GM12878 (cell line): ENCODE measurements at regions of chr10 and their contacts with region 1.

Region 1: DNA sequence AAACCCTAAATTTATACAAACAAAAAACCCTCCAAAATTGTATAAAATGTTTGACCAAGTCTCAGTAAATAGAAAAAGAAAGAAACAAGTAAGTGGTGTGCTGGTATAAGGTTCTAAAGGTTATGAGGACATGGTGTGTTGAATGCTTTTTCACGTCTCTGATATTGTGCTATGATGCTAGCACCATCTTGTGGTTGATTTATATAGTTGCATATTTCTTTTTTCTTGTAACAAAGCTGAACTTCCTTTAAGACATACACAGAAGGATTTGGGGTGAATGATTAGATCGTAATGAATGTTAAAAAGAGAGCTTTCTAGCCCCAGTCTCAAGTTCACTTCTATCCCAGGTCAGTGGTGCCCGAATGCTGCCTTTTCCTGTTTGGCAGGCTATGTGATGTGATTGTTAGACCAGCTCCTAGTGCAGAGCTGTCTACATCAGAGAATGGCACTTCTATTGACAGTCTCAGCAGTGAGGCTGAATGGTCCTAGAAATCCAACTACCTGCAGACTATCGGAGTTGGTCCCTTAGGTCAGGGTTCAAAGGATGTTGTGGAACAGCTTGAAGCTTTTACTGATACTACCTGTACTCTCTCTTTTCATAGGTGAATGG is 25.0 kb downstream of the VTI1A start:
- DNase-seq: peak; percentile 25
- ATAC-seq: peak; percentile 91
- H3K4me3 ChIP-seq: no peak overlapping the region
- H3K27ac ChIP-seq: no peak overlapping the region
- H3K4me1 ChIP-seq: no peaks in the 10 kb centered on the region
- H3K27me3 ChIP-seq: no peaks in the 10 kb centered on the region
- CTCF ChIP-seq: peak; percentile 56 to 82 (median 68); a peak in 5 of 6 replicates
- EP300 ChIP-seq: no peak
- POLR2A ChIP-seq: no peak
- RAD21 ChIP-seq: peak; percentile 78

Region 2: DNA sequence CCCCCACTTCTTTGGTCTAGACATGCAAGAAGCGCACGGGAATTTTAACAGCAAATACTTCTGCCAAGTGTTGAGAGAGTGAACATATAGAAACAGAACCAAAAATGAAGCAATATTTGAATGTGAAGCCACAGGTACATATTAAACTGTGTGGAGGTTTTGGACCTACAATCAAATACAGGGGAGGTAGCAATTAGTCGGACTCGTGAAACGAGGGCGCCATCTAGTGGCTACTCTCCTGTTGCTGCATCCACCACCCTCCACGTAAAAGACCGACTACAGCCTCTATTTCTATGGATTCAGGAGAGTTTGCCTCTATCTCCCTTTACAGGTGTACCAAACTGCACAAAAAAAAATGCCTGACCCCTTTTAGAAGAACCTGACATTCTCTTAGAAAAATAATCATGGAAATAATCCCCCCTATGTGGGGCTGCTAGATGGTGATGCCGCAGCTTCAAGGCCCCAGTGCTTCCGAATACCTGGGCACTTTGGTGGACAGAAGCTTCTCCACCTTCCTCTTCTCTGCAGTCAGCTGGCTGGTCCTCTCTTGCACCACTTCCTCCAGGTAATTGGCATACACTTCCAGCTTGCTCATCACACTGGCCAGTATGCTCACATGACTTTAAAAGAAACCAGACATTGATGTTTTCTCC is 157.0 kb before region 1 on chr10:
- CTCF ChIA-PET with region 1: interaction called, 42 read pairs
- POLR2A ChIA-PET with region 1: no interaction called
- RAD21 ChIA-PET with region 1: interaction called, 14 read pairs
- SMC1A ChIA-PET with region 1: interaction called, 12 read pairs
- in situ Hi-C with region 1: no loop called
- intact Hi-C with region 1: loop called (anchors 1 kb)
- DNase-seq: no peak
- ATAC-seq: peak; percentile 98
- H3K4me3 ChIP-seq: no peak overlapping the region
- H3K27ac ChIP-seq: no peak overlapping the region
- H3K4me1 ChIP-seq: no peaks in the 10 kb centered on the region
- H3K27me3 ChIP-seq: no peaks in the 10 kb centered on the region; a peak in 2 of 4 replicates
- CTCF ChIP-seq: peak; percentile 81 to 88 (median 82)
- EP300 ChIP-seq: no peak
- POLR2A ChIP-seq: no peak
- RAD21 ChIP-seq: peak; percentile 80

Region 3: GRCh38 chr10:112434988-112435619 is 36.9 kb before region 1 on chr10:
- CTCF ChIA-PET with region 1: interaction called, 26 read pairs
- POLR2A ChIA-PET with region 1: no interaction called
- RAD21 ChIA-PET with region 1: interaction called, 16 read pairs
- SMC1A ChIA-PET with region 1: interaction called, 11 read pairs
- in situ Hi-C with region 1: no loop called
- intact Hi-C with region 1: no loop called
- DNase-seq: no peak
- ATAC-seq: peak; percentile 63; the same call in 2 of the 3 replicates
- H3K4me3 ChIP-seq: no peak overlapping the region
- H3K27ac ChIP-seq: no peak overlapping the region
- H3K4me1 ChIP-seq: no peaks in the 10 kb centered on the region
- H3K27me3 ChIP-seq: no peaks in the 10 kb centered on the region
- CTCF ChIP-seq: peak in 2 of 3 experiments; percentile 6 to 37; a peak in 2 of 6 replicates
- EP300 ChIP-seq: no peak
- POLR2A ChIP-seq: no peak
- RAD21 ChIP-seq: peak; percentile 40

Region 4: GRCh38 chr10:112490545-112490944 is 18.6 kb after region 1 on chr10:
- CTCF ChIA-PET with region 1: interaction called, 23 read pairs
- POLR2A ChIA-PET with region 1: no interaction called
- RAD21 ChIA-PET with region 1: interaction called, 7 read pairs
- SMC1A ChIA-PET with region 1: interaction called, 7 read pairs
- in situ Hi-C with region 1: no loop called
- intact Hi-C with region 1: no loop called
- DNase-seq: no peak
- ATAC-seq: no peak
- H3K4me3 ChIP-seq: no peak overlapping the region
- H3K27ac ChIP-seq: no peak overlapping the region
- H3K4me1 ChIP-seq: no peaks in the 10 kb centered on the region
- H3K27me3 ChIP-seq: no peaks in the 10 kb centered on the region
- CTCF ChIP-seq: no peak
- EP300 ChIP-seq: no peak
- POLR2A ChIP-seq: no peak
- RAD21 ChIP-seq: no peak

Region 5: DNA sequence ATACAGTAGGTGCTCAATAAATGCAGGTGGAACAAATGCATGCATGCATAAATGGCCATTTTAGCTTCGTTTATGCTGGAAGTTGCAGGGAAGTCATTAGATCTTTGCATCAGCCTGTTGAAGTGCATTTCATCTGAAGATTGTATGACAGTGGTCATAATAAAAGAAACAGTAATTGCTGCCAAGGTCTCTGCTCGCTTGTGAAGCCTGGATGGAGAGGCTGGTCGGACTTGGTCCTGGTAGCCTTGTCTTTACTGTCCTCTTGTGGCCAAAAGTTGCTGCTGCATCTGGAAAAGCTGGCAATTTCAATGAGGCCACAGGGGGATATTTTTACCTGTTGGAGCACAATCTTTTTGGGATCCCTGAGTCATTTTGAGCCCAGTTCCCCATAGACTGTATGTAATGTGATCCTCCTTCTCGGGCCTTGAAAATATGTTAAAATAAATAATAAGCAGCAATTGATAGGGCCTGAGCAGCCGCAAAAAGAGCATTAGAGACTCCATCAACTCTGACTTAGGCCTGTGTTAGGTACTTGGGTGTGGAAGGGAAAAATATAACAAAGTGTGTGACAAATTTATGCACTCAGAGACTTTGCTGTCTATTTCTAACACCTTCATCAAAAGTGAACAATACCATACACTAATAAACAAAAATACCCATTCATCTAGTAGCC is 1049.3 kb after region 1 on chr10:
- CTCF ChIA-PET with region 1: interaction called, 9 read pairs
- POLR2A ChIA-PET with region 1: no interaction called
- RAD21 ChIA-PET with region 1: no interaction called
- SMC1A ChIA-PET with region 1: interaction called, 3 read pairs
- in situ Hi-C with region 1: no loop called
- intact Hi-C with region 1: loop called (anchors 10 kb)
- DNase-seq: no peak
- ATAC-seq: peak; percentile 83
- H3K4me3 ChIP-seq: no peak overlapping the region
- H3K27ac ChIP-seq: no peak overlapping the region
- H3K4me1 ChIP-seq: no peaks in the 10 kb centered on the region
- H3K27me3 ChIP-seq: no peaks in the 10 kb centered on the region; a peak in 1 of 4 replicates
- CTCF ChIP-seq: peak; percentile 87 to 97 (median 94)
- EP300 ChIP-seq: no peak
- POLR2A ChIP-seq: no peak
- RAD21 ChIP-seq: peak; percentile 76